CD4-positive, alpha-beta memory T cell (primary cell): ENCODE measurements at regions of chr15 and their contacts with region 1.

Region 1: DNA sequence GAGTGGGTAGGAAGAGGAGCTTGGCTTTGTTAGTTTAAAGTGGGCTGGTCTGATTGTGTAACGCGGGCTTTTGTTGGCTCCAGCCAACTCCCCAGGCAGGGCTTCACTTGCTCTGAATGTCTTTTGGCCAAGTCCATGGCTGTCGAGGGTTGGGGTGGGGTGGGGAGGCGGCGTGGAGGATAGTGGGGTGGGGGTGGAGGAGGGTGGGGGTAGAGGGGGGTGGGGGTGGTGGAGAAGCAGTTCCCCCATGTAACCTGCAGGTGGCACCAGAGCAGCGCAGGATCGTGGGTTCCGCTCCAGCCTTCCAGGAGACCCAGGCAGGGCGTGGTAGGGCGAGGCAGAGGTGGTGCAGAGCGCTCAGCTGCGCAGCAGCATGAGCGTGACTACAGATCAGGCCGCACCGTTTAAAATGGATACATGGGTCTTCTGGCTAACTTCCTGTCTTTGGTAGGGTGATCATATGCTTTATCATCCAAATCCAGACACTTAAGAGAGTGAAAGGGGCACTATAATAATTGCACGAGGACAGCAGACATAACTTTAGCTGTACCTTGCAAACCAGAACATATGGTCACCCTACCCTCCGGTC is 28.3 kb downstream of the GOLGA6A start:
- DNase-seq: peak; percentile 57 to 68 (median 61)
- H3K4me3 ChIP-seq: no peak overlapping the region
- H3K4me3 Mint-ChIP-seq: peak overlapping the region in 4 of 8 donors; percentile 17 to 46 (median 32)
- H3K27ac ChIP-seq: no peak overlapping the region
- H3K27ac Mint-ChIP-seq: peak overlapping the region in 1 of 7 donors; percentile 72
- H3K4me1 ChIP-seq: peaks cover 7% of the 10 kb centered on the region
- H3K4me1 Mint-ChIP-seq: peaks cover 2 to 18% (median 7%) of the 10 kb centered on the region in 4 donors
- H3K27me3 ChIP-seq: no peaks in the 10 kb centered on the region
- H3K27me3 Mint-ChIP-seq: peaks cover 0 to 2% of the 10 kb centered on the region in 2 donors

Region 2: DNA sequence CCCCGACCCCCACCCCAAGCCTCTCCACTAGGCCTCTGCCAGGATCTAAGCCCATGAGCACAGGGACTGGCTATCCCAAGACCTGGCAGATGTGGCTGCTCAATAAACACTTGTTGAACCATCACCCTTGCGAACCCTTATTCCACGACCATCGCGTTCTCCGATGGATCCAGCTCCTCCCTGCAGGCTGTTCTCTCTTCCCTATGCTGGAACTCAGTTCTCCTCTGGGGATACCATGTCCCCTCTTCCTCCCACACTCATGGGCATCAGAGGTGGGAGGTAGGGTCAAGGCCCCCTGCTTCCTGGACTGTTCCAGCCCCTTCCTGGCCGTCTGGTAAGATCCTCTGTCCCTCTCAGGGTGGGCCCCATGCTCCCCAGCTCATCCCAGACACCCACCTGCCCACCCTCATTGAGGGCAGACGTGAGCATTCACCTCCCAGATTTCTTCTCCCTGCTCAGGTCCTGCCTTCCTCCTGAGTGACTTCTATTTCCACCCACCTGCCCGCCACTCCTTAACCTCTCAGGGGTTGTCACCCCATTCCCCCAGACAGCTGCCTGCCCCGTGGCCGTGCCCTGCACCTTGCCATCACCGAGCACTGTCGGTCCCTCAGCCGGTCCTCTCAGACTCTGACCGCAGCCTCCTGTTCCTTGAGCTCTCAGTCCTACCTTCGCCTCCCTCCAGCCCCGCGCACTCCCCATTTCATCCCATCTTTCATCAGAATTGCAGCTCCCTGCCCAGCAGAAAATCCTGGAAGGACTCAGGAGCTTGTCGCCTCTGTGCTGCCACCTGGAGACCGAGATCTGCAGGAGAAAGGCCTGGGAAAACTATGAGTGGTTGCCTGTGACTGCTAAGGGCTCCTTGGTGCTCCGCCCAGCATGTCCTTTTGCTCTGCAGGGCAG is 17.5 kb before region 1 on chr15:
- CTCF ChIA-PET with region 1: interaction called, 39 read pairs
- POLR2A ChIA-PET with region 1: interaction called, 3 read pairs
- intact Hi-C with region 1: no loop called
- DNase-seq: no peak
- H3K4me3 ChIP-seq: no peak overlapping the region
- H3K4me3 Mint-ChIP-seq: no peak overlapping the region
- H3K27ac ChIP-seq: no peak overlapping the region
- H3K27ac Mint-ChIP-seq: peak overlapping the region in 2 of 7 donors; percentile 38 to 64
- H3K4me1 ChIP-seq: no peaks in the 10 kb centered on the region
- H3K4me1 Mint-ChIP-seq: no peaks in the 10 kb centered on the region
- H3K27me3 ChIP-seq: no peaks in the 10 kb centered on the region
- H3K27me3 Mint-ChIP-seq: no peaks in the 10 kb centered on the region

Region 3: GRCh38 chr15:74127260-74127953 is 73.4 kb after region 1 on chr15:
- CTCF ChIA-PET with region 1: no interaction called
- POLR2A ChIA-PET with region 1: no interaction called
- intact Hi-C with region 1: no loop called
- DNase-seq: peak; percentile 69 to 76 (median 71)
- H3K4me3 ChIP-seq: no peak overlapping the region
- H3K4me3 Mint-ChIP-seq: peak overlapping the region in 6 of 8 donors; percentile 31 to 59 (median 39)
- H3K27ac ChIP-seq: no peak overlapping the region
- H3K27ac Mint-ChIP-seq: no peak overlapping the region
- H3K4me1 ChIP-seq: peaks cover 25% of the 10 kb centered on the region
- H3K4me1 Mint-ChIP-seq: peaks cover 2 to 29% (median 16%) of the 10 kb centered on the region in 4 donors
- H3K27me3 ChIP-seq: peaks cover 38% of the 10 kb centered on the region
- H3K27me3 Mint-ChIP-seq: peaks cover 50 to 60% of the 10 kb centered on the region in 2 donors